ENCODE measurements at regions of chr5 and their contacts with region 1.

Region 1: DNA sequence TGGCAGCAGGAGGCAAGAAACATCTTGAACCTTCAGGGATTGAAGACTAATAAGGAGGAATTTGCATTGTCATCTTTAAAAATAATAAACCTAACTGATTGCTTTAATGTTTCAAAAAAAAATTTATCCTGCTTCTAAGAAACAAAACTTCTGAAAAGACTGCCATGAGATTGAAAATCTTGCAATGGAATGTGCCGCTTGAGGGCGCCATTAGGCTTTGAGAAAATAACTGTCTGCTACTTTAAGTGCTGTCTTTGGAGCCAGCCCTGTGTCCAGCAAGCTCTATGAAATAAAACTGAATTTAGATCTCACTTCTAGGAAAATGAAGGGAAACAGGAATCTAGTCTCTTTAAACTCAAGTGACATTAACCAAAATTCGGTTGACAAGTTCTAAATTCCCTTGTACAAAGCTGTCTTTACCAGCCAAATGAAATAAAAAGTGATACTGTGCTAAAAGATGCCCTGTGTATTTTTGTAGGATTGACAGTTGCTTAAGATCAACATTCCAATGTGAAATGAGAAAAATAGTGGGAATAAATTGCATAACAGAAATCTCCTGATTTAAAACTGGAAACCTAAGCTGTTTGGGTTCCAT is 79.4 kb downstream of the ESM1 start:
- DNase-seq: peak; percentile 91
- H3K4me3 ChIP-seq: peak overlapping the region in 1 of 3 experiments; percentile 7
- H3K27ac ChIP-seq: no peak overlapping the region
- H3K4me1 ChIP-seq: peaks cover 39% of the 10 kb centered on the region
- H3K27me3 ChIP-seq: no peaks in the 10 kb centered on the region
- CTCF ChIP-seq: peak; percentile 59 to 63
- POLR2A ChIP-seq: no peak

Region 2: GRCh38 chr5:54310433-54311175 is 595.4 kb before region 1 on chr5 and contains the start of gene ARL15:
- CTCF ChIA-PET with region 1: no interaction called
- POLR2A ChIA-PET with region 1: no interaction called
- dilution Hi-C with region 1: no loop called
- intact Hi-C with region 1: no loop called
- DNase-seq: peak; percentile 98
- H3K4me3 ChIP-seq: peak within 1 kb of the TSS; percentile 83 to 95 (median 88)
- H3K27ac ChIP-seq: peak within 1 kb of the TSS; percentile 45
- H3K4me1 ChIP-seq: peaks cover 24% of the 10 kb centered on the region
- H3K27me3 ChIP-seq: peaks cover 8 to 11% of the 10 kb centered on the region in 2 experiments
- CTCF ChIP-seq: no peak
- POLR2A ChIP-seq: peak; percentile 99
- total RNA-seq, gene ARL15: 24.4 and 27.3 TPM in 2 replicates

Region 3: DNA sequence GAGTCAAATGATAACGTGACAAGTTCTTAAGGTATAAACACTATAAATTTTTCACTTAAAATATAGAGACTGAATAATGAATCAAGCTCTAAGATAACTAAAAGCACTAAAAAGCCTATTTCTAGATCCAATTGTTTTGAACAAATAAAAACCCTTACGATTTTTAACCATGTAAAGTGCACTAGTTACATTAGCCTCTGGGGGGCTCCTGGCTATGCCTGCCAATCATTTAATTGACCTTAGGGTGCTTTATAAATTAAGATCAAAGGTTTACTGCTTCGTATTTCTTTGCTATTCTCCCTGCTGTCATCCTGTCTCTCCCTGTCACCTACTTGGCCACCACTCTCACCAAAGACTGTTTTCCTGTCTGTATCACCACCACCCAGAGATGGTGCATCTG is 54.0 kb before region 1 on chr5:
- CTCF ChIA-PET with region 1: no interaction called
- POLR2A ChIA-PET with region 1: no interaction called
- dilution Hi-C with region 1: no loop called
- intact Hi-C with region 1: loop called (anchors 2 kb)
- DNase-seq: no peak
- H3K4me3 ChIP-seq: no peak overlapping the region
- H3K27ac ChIP-seq: no peak overlapping the region
- H3K4me1 ChIP-seq: no peaks in the 10 kb centered on the region
- H3K27me3 ChIP-seq: peaks cover 0 to 4% of the 10 kb centered on the region in 2 experiments
- CTCF ChIP-seq: no peak
- POLR2A ChIP-seq: no peak

Region 4: DNA sequence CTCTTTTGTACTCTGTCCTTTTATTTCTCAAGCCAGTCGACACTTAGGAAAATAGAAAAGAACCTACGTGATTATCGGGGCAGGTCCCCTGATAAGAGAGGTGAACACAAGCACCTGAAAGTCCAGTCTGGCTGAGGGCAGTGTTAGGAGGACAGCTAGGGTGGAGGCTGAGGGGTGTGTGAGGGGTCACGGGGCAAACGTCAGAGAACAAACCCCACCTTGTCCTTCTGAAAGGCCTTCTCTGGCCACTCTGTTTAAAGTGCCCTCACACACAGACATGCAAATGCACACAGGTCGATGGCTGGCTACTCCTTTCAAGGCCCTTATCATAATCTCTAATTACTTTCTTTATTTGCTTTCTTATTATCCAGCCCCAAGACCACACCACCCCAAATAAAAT is 29.5 kb before region 1 on chr5:
- CTCF ChIA-PET with region 1: no interaction called
- POLR2A ChIA-PET with region 1: no interaction called
- dilution Hi-C with region 1: no loop called
- intact Hi-C with region 1: no loop called
- DNase-seq: no peak
- H3K4me3 ChIP-seq: no peak overlapping the region
- H3K27ac ChIP-seq: no peak overlapping the region
- H3K4me1 ChIP-seq: peaks cover 3% of the 10 kb centered on the region
- H3K27me3 ChIP-seq: peaks cover 0 to 2% of the 10 kb centered on the region in 2 experiments
- CTCF ChIP-seq: no peak
- POLR2A ChIP-seq: no peak

Region 5: DNA sequence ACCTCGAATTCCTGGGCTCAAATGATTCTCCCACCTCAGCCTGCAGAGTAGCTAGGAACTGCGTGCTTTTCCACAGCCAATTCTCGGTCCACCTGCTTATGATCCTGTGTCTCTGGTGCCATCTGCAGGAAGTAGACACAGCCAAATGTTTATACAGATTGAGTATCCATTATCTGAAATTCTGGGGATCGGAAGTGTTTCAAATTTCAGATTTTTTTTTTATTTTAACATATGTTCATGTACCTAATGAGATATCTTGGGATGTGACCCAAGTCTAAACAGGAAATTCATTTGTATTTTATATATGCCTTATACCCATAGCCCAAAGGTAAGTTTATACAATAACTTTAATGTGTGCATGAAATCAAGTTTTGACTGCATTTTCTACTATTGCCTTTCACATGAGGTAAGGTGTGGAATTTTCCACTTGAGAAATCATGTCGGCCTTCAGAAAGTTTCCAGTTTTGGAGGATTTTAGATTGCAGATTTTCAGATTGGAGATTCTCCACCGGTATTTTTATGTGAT is 10.2 kb before region 1 on chr5:
- CTCF ChIA-PET with region 1: interaction called, 13 read pairs
- POLR2A ChIA-PET with region 1: no interaction called
- dilution Hi-C with region 1: no loop called
- intact Hi-C with region 1: no loop called
- DNase-seq: peak; percentile 40
- H3K4me3 ChIP-seq: no peak overlapping the region
- H3K27ac ChIP-seq: no peak overlapping the region
- H3K4me1 ChIP-seq: peaks cover 1% of the 10 kb centered on the region
- H3K27me3 ChIP-seq: peaks cover 0 to 2% of the 10 kb centered on the region in 2 experiments
- CTCF ChIP-seq: peak; percentile 7 to 10
- POLR2A ChIP-seq: no peak

Region 6: DNA sequence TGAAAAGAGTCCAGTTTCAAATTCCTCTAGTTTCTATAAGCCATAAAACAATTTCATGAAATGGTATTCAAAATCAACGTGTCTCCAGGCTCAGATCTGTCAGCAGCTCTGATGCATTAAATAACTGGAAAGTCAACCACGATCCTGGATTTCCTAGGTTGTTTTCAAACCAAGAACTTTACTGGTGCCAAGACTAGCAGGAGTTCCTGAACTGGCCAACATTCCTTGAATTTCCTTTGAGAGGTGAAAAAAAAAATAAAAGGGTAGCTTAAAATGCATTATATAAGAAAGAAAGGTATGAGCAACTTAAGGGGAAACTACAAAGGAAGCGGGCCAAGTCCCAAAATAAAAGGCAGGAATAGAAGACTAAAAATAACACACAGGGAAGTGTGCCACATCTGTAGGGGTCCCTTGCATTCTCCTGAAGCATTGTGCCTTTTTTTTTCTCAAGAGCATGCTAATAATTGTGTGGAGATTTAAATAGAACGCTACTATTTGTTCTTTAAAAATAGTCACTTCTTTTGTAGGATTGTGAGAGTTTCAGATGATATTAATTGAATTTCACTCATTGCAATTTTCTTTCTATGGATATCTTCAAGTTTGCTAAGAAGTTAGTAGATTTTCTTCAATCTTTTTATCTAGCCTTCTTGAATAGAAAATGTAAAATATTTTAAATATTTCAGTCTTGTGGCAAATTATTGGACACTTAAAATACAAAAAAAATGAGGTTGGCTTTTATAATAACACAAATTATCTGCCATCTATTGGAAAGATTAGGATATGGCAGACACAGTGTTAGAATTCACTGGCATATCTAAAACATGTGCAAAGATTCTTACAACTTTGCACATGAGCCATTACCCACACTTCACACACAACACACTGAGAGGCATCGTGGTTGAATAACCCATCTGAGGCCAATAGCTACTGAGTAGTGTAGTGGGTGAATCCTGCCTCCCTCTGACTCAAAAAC is 64.1 kb after region 1 on chr5:
- CTCF ChIA-PET with region 1: interaction called, 9 read pairs
- POLR2A ChIA-PET with region 1: no interaction called
- dilution Hi-C with region 1: no loop called
- intact Hi-C with region 1: loop called (anchors 2 kb)
- DNase-seq: peak; percentile 88
- H3K4me3 ChIP-seq: no peak overlapping the region
- H3K27ac ChIP-seq: no peak overlapping the region
- H3K4me1 ChIP-seq: peaks cover 27% of the 10 kb centered on the region
- H3K27me3 ChIP-seq: no peaks in the 10 kb centered on the region
- CTCF ChIP-seq: no peak
- POLR2A ChIP-seq: no peak

Region 7: GRCh38 chr5:55146543-55147151 is 240.6 kb after region 1 on chr5:
- CTCF ChIA-PET with region 1: interaction called, 111 read pairs
- POLR2A ChIA-PET with region 1: no interaction called
- dilution Hi-C with region 1: no loop called
- intact Hi-C with region 1: loop called (anchors 1 kb)
- DNase-seq: peak; percentile 92
- H3K4me3 ChIP-seq: no peak overlapping the region
- H3K27ac ChIP-seq: no peak overlapping the region
- H3K4me1 ChIP-seq: peaks cover 5% of the 10 kb centered on the region
- H3K27me3 ChIP-seq: no peaks in the 10 kb centered on the region
- CTCF ChIP-seq: peak; percentile 90 to 94
- POLR2A ChIP-seq: no peak

Region 8: GRCh38 chr5:55278778-55279177 is 372.7 kb after region 1 on chr5:
- CTCF ChIA-PET with region 1: no interaction called
- POLR2A ChIA-PET with region 1: no interaction called
- dilution Hi-C with region 1: no loop called
- intact Hi-C with region 1: no loop called
- DNase-seq: no peak
- H3K4me3 ChIP-seq: no peak overlapping the region
- H3K27ac ChIP-seq: no peak overlapping the region
- H3K4me1 ChIP-seq: no peaks in the 10 kb centered on the region
- H3K27me3 ChIP-seq: no peaks in the 10 kb centered on the region
- CTCF ChIP-seq: no peak
- POLR2A ChIP-seq: no peak

Region 9: GRCh38 chr5:55307383-55308253 is 401.6 kb after region 1 on chr5 and contains the starts of genes DHX29 and MTREX:
- CTCF ChIA-PET with region 1: no interaction called
- POLR2A ChIA-PET with region 1: no interaction called
- dilution Hi-C with region 1: no loop called
- intact Hi-C with region 1: loop called (anchors 2 kb)
- DNase-seq: peak; percentile 97
- H3K4me3 ChIP-seq: peak within 1 kb of the TSS; percentile 77 to 99 (median 81)
- H3K27ac ChIP-seq: peak within 1 kb of the TSS; percentile 82
- H3K4me1 ChIP-seq: peaks cover 45% of the 10 kb centered on the region
- H3K27me3 ChIP-seq: no peaks in the 10 kb centered on the region
- CTCF ChIP-seq: no peak
- POLR2A ChIP-seq: peak; percentile 48
- total RNA-seq, gene DHX29: 28.0 and 32.8 TPM in 2 replicates
- total RNA-seq, gene MTREX: 76.3 and 77.2 TPM in 2 replicates